Activated B cell treated with CpG ODN at 0.5 μM for 24 hours (primary cell): ENCODE measurements at regions of chr12 and their contacts with region 1.

Region 1: DNA sequence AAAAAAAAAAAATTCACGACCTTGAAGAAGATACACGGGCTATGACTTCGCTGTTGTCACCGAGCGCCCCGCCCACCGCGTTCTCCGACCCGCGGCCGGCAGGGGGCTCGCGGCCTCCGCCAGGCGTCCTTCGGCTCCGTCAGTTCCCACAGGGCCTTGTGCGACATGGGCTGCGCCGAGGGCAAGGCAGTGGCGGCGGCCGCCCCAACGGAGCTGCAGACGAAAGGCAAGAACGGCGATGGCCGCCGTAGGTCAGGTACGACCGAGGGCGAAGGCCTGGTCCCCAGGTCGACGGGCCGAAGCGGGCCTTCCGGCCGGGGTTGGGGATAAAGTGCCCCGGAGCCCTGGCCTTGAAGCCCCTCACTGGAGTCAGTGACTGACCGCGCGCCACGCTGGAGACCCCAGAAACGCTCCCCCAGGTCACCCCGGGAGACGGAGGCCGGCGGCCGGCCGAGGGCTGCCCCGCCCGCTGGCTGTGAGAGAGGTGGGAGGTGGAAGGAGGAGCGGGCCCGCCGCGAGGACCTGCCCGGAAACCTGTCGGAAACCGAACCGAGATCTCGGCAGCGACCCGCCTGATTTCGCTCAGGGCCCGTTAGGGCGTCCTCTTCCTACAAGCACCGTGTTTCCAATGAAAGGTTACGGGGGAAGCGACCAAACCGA is at the start of gene TXNRD1:
- DNase-seq: peak; percentile 82
- ATAC-seq: peak; percentile 93
- H3K4me3 Mint-ChIP-seq: peak within 1 kb of the TSS; percentile 79
- H3K27ac Mint-ChIP-seq: peak within 1 kb of the TSS; percentile 65
- H3K4me1 Mint-ChIP-seq: peaks cover 21% of the 10 kb centered on the region
- H3K27me3 Mint-ChIP-seq: peaks cover 6% of the 10 kb centered on the region
- CTCF ChIP-seq: no peak
- total RNA-seq, gene TXNRD1: 72.0 and 77.3 TPM in 2 replicates

Region 2: GRCh38 chr12:104303538-104304151 is 87.9 kb after region 1 on chr12 and contains the start of gene EID3:
- CTCF ChIA-PET with region 1: interaction called, 7 read pairs
- POLR2A ChIA-PET with region 1: interaction called, 5 read pairs
- intact Hi-C with region 1: loop called (anchors 1 kb)
- DNase-seq: peak; percentile 88
- ATAC-seq: peak; percentile 99
- H3K4me3 Mint-ChIP-seq: peak within 1 kb of the TSS; percentile 94
- H3K27ac Mint-ChIP-seq: peak within 1 kb of the TSS; percentile 93
- H3K4me1 Mint-ChIP-seq: peaks cover 37% of the 10 kb centered on the region
- H3K27me3 Mint-ChIP-seq: no peaks in the 10 kb centered on the region
- CTCF ChIP-seq: no peak
- total RNA-seq, gene EID3: 6.2 TPM in 2 replicates

Region 3: DNA sequence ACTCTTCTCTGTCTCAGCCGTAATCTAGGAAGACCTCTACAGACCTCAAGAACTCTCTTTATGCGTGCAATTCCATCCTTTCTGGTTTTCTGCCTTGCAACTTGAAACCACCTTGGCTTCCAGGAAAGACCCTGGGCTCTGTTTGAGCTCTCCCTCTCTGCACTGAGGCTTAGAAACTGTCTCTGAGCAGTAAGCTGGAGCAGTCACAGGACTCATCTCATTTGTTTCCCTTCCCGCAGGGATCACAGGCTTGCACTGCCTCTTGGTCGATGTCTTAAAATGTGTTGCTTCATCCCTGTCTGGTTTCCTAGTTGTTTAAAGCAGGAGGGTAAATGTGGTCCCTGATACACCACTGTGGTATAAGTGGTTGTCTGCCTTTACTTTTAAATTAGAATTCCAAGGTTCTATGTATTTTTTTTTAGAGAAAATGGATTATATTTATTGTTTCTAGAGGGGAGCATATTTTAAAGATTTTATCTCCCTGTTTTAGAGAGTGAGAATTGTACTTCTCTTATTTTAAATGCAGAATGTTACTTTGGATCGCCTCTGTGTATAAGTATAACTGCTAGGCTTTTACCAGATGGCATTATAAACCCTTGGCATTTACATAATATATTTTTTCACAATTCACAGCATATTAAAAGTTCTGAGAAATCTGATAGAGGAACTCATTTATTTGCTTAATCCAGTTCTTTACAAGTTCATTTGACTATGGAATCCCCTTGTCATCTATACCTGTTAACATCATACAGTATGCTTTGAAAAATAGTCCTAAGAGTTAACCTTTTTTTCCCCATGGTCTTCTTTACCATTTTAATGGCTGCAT is 114.2 kb after region 1 on chr12:
- CTCF ChIA-PET with region 1: no interaction called
- POLR2A ChIA-PET with region 1: interaction called, 10 read pairs
- intact Hi-C with region 1: no loop called
- DNase-seq: no peak
- ATAC-seq: no peak
- H3K4me3 Mint-ChIP-seq: no peak overlapping the region
- H3K27ac Mint-ChIP-seq: no peak overlapping the region
- H3K4me1 Mint-ChIP-seq: no peaks in the 10 kb centered on the region
- H3K27me3 Mint-ChIP-seq: no peaks in the 10 kb centered on the region
- CTCF ChIP-seq: no peak

Region 4: GRCh38 chr12:104358347-104359003 is 142.7 kb after region 1 on chr12:
- CTCF ChIA-PET with region 1: interaction called, 4 read pairs
- POLR2A ChIA-PET with region 1: no interaction called
- intact Hi-C with region 1: loop called (anchors 1 kb)
- DNase-seq: peak; percentile 35
- ATAC-seq: peak; percentile 98
- H3K4me3 Mint-ChIP-seq: no peak overlapping the region
- H3K27ac Mint-ChIP-seq: peak overlapping the region; percentile 8
- H3K4me1 Mint-ChIP-seq: no peaks in the 10 kb centered on the region
- H3K27me3 Mint-ChIP-seq: no peaks in the 10 kb centered on the region
- CTCF ChIP-seq: no peak

Region 5: GRCh38 chr12:104877123-104877705 is 661.4 kb after region 1 on chr12:
- CTCF ChIA-PET with region 1: no interaction called
- POLR2A ChIA-PET with region 1: no interaction called
- intact Hi-C with region 1: loop called (anchors 1 kb)
- DNase-seq: no peak
- ATAC-seq: no peak
- H3K4me3 Mint-ChIP-seq: no peak overlapping the region
- H3K27ac Mint-ChIP-seq: no peak overlapping the region
- H3K4me1 Mint-ChIP-seq: no peaks in the 10 kb centered on the region
- H3K27me3 Mint-ChIP-seq: peaks cover 3% of the 10 kb centered on the region
- CTCF ChIP-seq: no peak